Thyroid gland (tissue), 4 donors: ENCODE measurements at regions of chr12 and their contacts with region 1.

Region 1: DNA sequence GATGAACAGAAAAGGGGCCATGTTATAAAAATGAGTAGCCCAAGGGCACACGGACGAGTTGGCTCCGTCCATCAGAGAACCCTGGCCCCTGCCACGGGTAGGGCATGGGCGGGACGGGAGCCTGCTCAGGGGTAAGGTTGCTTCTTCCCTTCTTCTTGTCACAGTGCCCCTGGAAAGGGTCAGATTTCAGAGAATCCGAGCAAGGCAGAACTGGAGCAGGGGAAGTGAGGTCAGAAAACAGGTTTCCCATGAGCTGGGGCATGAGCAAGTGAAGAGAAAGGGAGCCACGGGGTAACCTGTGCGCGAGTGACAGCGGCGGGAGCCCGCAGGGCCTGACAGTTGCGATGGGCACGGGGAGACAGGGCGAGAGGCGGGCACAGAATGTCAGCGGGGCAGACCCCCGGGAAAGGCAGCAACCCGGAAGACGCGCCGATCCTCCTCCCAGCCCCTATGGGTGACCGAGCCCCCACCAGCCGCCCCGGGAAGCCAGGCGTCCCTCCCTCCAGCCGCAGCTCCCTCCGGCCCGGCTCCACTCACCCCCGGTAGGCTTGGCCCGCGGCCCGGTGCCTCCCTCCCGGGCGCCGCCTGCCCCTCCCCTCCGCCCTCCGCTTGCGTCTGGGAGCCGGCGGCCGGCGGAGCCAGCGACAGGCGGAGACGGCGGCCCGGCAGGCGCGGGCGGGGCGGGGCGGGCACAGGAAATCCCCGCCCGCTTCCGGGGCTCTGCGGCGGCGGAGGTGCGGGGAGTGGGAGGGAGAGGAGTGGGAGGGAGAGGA is at the start of gene ZNF641:
- DNase-seq: peak; percentile 85 to 86
- H3K4me3 ChIP-seq: peak within 1 kb of the TSS; percentile 34 to 79 (median 67)
- H3K27ac ChIP-seq: peak within 1 kb of the TSS; percentile 94 to 97 (median 94)
- H3K4me1 ChIP-seq: peaks cover 6 to 22% of the 10 kb centered on the region in 2 donors
- H3K27me3 ChIP-seq: no peaks in the 10 kb centered on the region
- CTCF ChIP-seq: no peak
- POLR2A ChIP-seq: peak in 1 of 2 donors; percentile 68
- total RNA-seq, gene ZNF641: 19.1 to 119 (median 29.9) TPM

Region 2: GRCh38 chr12:48183091-48183875 is 167.2 kb before region 1 on chr12 and contains the start of gene CCDC184:
- intact Hi-C with region 1: loop called (anchors 10 kb)
- DNase-seq: peak; percentile 17 to 19
- H3K4me3 ChIP-seq: peak within 1 kb of the TSS; percentile 7 to 40 (median 17)
- H3K27ac ChIP-seq: no peak within 1 kb of the TSS
- H3K4me1 ChIP-seq: peaks cover 19 to 23% of the 10 kb centered on the region in 2 donors
- H3K27me3 ChIP-seq: peaks cover 6% of the 10 kb centered on the region
- CTCF ChIP-seq: peak in 2 of 6 experiments; percentile 6 to 18
- POLR2A ChIP-seq: no peak
- total RNA-seq, gene CCDC184: 0.44 to 0.54 TPM in 2 of 4 donors, not detected in the others

Region 3: GRCh38 chr12:48286665-48287064 is 63.8 kb before region 1 on chr12:
- intact Hi-C with region 1: no loop called
- DNase-seq: no peak
- H3K4me3 ChIP-seq: no peak overlapping the region
- H3K27ac ChIP-seq: no peak overlapping the region
- H3K4me1 ChIP-seq: no peaks in the 10 kb centered on the region
- H3K27me3 ChIP-seq: no peaks in the 10 kb centered on the region
- CTCF ChIP-seq: peak in 1 of 6 experiments; percentile 33
- POLR2A ChIP-seq: no peak